ENCODE measurements at regions of chr6 and their contacts with region 1.

Region 1: DNA sequence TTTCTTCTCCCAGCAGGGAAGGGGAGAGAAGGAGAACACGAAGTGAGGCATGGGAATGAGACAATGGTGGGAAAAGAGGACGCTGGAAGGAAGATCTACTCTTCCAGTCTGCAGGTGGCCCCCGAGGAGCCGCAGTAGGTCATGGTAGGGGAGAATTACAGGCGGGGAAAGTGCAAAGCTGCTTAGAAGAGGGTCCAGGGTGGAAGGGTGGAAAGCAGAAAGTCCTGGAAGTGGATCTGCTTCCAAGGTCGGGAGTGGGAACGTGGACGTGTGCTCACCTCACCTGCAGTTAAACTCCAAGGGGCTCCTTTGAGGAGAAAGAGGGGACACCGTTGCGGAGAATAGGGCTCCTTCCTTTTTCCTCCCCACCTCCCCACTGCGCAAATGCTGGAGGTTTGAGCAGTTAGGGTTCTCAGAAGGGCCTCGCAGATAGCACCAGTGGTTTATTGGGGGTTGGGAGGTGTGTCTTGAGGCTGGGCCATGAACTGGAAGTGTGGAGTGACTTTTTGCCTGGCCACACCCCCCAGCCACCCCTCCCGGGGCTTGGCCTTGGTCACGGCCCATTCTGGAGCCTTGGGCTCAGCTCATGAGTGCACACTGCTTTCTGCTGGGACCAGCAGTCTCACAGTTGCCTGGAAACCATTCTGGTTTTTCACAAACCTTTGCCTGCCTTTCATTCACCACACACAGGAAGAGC is 100.4 kb upstream of the MLN start:
- DNase-seq: peak; percentile 97
- H3K4me3 Mint-ChIP-seq: peak overlapping the region; percentile 73
- H3K27ac Mint-ChIP-seq: peak overlapping the region; percentile 94
- H3K4me1 Mint-ChIP-seq: peaks cover 67% of the 10 kb centered on the region
- H3K27me3 Mint-ChIP-seq: no peaks in the 10 kb centered on the region

Region 2: GRCh38 chr6:33788694-33789549 is 115.3 kb before region 1 on chr6 and contains the start of gene LEMD2:
- intact Hi-C with region 1: loop called (anchors 5 kb)
- DNase-seq: peak; percentile 99
- H3K4me3 Mint-ChIP-seq: peak within 1 kb of the TSS; percentile 88
- H3K27ac Mint-ChIP-seq: peak within 1 kb of the TSS; percentile 93
- H3K4me1 Mint-ChIP-seq: peaks cover 40% of the 10 kb centered on the region
- H3K27me3 Mint-ChIP-seq: peaks cover 18% of the 10 kb centered on the region
- total RNA-seq, gene LEMD2: 64.3 and 66.4 TPM in 2 replicates

Region 3: GRCh38 chr6:33851959-33852358 is 52.2 kb before region 1 on chr6:
- intact Hi-C with region 1: loop called (anchors 10 kb)
- DNase-seq: peak; percentile 78
- H3K4me3 Mint-ChIP-seq: no peak overlapping the region
- H3K27ac Mint-ChIP-seq: no peak overlapping the region
- H3K4me1 Mint-ChIP-seq: peaks cover 9% of the 10 kb centered on the region
- H3K27me3 Mint-ChIP-seq: peaks cover 31% of the 10 kb centered on the region